AG04450 (cell line): ENCODE measurements at regions of chr1 and their contacts with region 1.

Region 1: DNA sequence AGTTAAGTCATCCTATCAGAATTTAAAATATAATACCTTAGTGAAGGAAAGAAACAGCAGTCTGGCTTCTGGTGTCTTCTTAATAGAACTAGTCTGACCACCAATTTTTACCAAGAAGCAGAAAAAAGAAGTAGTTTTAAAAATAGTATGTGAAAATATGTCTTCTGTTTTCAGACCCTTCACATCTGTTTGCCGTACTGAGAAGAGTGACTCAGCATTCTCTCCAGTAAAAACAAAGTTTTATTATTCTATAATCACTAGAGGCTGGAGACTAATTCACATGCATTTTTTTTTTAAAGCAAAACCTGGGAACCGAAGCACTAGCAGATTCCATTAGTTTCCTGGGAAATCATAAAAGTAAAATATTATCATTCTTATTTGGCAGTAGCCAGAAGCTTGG is 163.8 kb downstream of the COL24A1 start:
- DNase-seq: peak; percentile 27
- H3K4me3 ChIP-seq: no peak overlapping the region; the same call in 1 of the 2 replicates
- H3K27ac ChIP-seq: no peak overlapping the region
- H3K27me3 ChIP-seq: no peaks in the 10 kb centered on the region
- CTCF ChIP-seq: no peak

Region 2: DNA sequence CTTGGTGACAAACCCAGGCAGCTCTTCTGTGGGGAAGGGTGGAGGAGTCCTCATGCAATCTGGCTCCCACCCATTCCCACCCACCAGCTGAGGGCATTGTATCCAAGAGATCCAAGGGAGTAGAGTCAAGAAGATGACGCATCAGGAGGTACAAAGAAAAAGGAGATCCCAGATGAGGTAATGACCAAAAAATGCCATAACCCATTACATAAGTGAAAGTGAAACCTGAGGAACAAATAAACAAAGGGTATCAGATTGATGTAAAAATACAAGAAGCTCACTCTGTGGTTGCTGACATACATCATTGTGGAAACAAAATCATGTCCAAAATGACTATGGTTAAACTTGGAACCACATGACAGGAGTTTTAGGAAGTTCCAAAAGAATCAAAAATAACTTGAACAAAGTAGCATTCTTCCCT is 369.7 kb before region 1 on chr1:
- CTCF ChIA-PET with region 1: no interaction called
- POLR2A ChIA-PET with region 1: interaction called, 12 read pairs
- DNase-seq: peak; percentile 79
- H3K4me3 ChIP-seq: no peak overlapping the region
- H3K27ac ChIP-seq: peak overlapping the region; percentile 84
- H3K27me3 ChIP-seq: no peaks in the 10 kb centered on the region
- CTCF ChIP-seq: no peak

Region 3: GRCh38 chr1:86082183-86082582 is 89.4 kb after region 1 on chr1:
- CTCF ChIA-PET with region 1: no interaction called
- POLR2A ChIA-PET with region 1: no interaction called
- DNase-seq: no peak
- H3K4me3 ChIP-seq: no peak overlapping the region
- H3K27ac ChIP-seq: no peak overlapping the region
- H3K27me3 ChIP-seq: no peaks in the 10 kb centered on the region
- CTCF ChIP-seq: peak; percentile 26; the same call in 1 of the 2 replicates